A673 (cell line): ENCODE measurements at regions of chr11 and their contacts with region 1.

Region 1: GRCh38 chr11:66251809-66252208 is 16.6 kb upstream of the RAB1B start:
- DNase-seq: no peak
- H3K4me3 ChIP-seq: no peak overlapping the region
- H3K27ac ChIP-seq: no peak overlapping the region
- H3K4me1 ChIP-seq: peaks cover 3% of the 10 kb centered on the region
- H3K27me3 ChIP-seq: no peaks in the 10 kb centered on the region
- CTCF ChIP-seq: no peak

Region 2: DNA sequence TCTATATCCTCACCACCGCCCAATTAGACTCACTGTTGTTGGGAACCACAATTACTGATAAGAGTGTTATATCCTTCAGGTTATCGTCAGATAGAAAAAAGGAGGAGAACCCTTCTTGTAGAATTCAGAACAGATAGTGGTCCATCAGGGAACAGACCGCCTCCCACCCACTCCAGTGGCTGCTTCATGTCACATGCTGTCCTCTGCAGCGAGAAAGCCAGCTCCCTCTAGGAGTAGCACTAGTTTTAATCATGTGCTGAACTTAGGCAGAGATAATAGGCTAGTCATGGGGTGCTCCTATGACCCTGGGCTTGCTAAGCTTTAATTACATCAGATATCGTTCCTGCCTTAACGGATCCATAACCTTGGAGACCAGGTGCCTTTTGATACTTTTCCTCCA is 34.9 kb before region 1 on chr11:
- CTCF ChIA-PET with region 1: no interaction called
- POLR2A ChIA-PET with region 1: interaction called, 17 read pairs
- intact Hi-C with region 1: no loop called
- DNase-seq: no peak
- H3K4me3 ChIP-seq: no peak overlapping the region
- H3K27ac ChIP-seq: no peak overlapping the region
- H3K4me1 ChIP-seq: no peaks in the 10 kb centered on the region
- H3K27me3 ChIP-seq: no peaks in the 10 kb centered on the region
- CTCF ChIP-seq: no peak